ENCODE measurements at regions of chr1 and their contacts with region 1.

Region 1: GRCh38 chr1:100322436-100323211 is 29.7 kb upstream of the CDC14A start:
- DNase-seq: no peak
- ATAC-seq: no peak
- H3K4me3 ChIP-seq: no peak overlapping the region
- H3K4me3 Mint-ChIP-seq: no peak overlapping the region
- H3K27ac ChIP-seq: no peak overlapping the region
- H3K27ac Mint-ChIP-seq: no peak overlapping the region
- H3K4me1 ChIP-seq: no peaks in the 10 kb centered on the region
- H3K4me1 Mint-ChIP-seq: no peaks in the 10 kb centered on the region
- H3K27me3 ChIP-seq: no peaks in the 10 kb centered on the region
- H3K27me3 Mint-ChIP-seq: no peaks in the 10 kb centered on the region

Region 2: GRCh38 chr1:99758073-99758511 is 564.5 kb before region 1 on chr1:
- CTCF ChIA-PET with region 1: no interaction called
- POLR2A ChIA-PET with region 1: no interaction called
- DNase-seq: no peak
- ATAC-seq: no peak
- H3K4me3 ChIP-seq: no peak overlapping the region
- H3K4me3 Mint-ChIP-seq: no peak overlapping the region
- H3K27ac ChIP-seq: no peak overlapping the region
- H3K27ac Mint-ChIP-seq: no peak overlapping the region
- H3K4me1 ChIP-seq: peaks cover 0 to 3% of the 10 kb centered on the region in 2 experiments
- H3K4me1 Mint-ChIP-seq: peaks cover 0 to 8% (median 8%) of the 10 kb centered on the region in 3 donors
- H3K27me3 ChIP-seq: no peaks in the 10 kb centered on the region
- H3K27me3 Mint-ChIP-seq: peaks cover 0 to 1% of the 10 kb centered on the region in 2 donors

Region 3: DNA sequence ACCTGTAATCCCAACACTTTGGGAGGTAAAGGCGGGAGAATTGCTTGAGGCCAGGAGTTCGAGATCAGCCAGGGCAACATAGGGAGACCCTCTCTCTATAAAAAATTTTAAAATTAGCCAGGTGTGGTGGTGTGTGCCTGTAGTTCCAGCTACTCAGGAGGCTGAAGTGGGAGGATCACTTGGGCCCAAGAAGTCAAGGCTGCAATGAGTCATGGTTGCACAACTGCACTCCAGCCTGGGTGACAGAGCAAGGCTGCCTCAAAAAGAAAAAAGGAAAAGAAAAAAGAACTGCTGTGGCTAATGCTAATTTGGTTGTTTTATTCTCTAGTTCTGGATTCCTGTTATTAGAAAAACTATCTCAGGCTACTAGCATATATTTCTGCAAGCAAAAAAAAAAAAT is 102.7 kb before region 1 on chr1:
- CTCF ChIA-PET with region 1: no interaction called
- POLR2A ChIA-PET with region 1: no interaction called
- DNase-seq: no peak
- ATAC-seq: no peak
- H3K4me3 ChIP-seq: no peak overlapping the region
- H3K4me3 Mint-ChIP-seq: no peak overlapping the region
- H3K27ac ChIP-seq: no peak overlapping the region
- H3K27ac Mint-ChIP-seq: no peak overlapping the region
- H3K4me1 ChIP-seq: no peaks in the 10 kb centered on the region
- H3K4me1 Mint-ChIP-seq: peaks cover 9 to 12% (median 11%) of the 10 kb centered on the region in 3 donors
- H3K27me3 ChIP-seq: no peaks in the 10 kb centered on the region
- H3K27me3 Mint-ChIP-seq: no peaks in the 10 kb centered on the region

Region 4: DNA sequence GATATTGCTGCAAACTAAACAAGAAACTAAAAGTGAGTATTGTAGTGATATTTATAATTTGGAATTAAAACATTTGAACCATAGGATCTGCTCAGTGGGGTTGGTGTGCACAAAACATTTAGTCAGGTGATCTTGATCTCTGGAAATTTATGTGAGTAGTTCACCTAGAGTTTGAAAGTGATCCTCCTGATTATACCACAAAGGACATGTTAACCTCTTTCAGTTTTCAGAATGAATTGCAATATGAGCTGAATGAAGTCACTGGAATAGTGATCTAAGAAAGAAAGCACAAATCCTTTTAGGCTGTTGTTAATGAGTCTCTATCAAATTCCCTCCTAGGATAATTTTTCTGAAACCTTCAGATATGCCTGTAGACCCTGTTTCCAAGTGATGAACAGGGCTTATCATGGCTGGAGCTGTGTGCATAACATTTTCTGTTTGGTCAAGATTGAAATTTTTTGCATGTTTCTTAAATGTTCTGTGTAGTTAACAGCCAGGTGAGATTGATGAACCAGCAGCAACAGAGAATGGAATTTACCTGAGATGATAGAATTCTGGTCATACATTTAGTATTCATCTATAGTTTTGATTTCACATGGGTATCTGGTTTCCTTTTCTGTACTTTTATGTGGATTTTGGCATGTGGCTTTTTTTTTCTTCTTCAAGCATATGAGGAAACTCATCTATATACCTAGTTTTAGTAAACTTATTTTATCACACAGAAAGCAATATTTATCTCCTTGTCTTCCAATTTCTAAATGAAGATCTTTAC is 55.2 kb after region 1 on chr1:
- CTCF ChIA-PET with region 1: no interaction called
- POLR2A ChIA-PET with region 1: interaction called in 1 of 2 experiments, 10 read pairs
- DNase-seq: no peak
- ATAC-seq: peak; percentile 20 to 55 (median 40)
- H3K4me3 ChIP-seq: no peak overlapping the region
- H3K4me3 Mint-ChIP-seq: peak overlapping the region; percentile 10 to 44 (median 28)
- H3K27ac ChIP-seq: no peak overlapping the region
- H3K27ac Mint-ChIP-seq: peak overlapping the region; percentile 79 to 83
- H3K4me1 ChIP-seq: peaks cover 22% of the 10 kb centered on the region in 2 experiments
- H3K4me1 Mint-ChIP-seq: peaks cover 77 to 86% (median 83%) of the 10 kb centered on the region in 3 donors
- H3K27me3 ChIP-seq: no peaks in the 10 kb centered on the region
- H3K27me3 Mint-ChIP-seq: no peaks in the 10 kb centered on the region

Region 5: GRCh38 chr1:100404821-100405220 is 82.2 kb after region 1 on chr1:
- CTCF ChIA-PET with region 1: no interaction called
- POLR2A ChIA-PET with region 1: no interaction called
- DNase-seq: no peak
- ATAC-seq: no peak
- H3K4me3 ChIP-seq: no peak overlapping the region
- H3K4me3 Mint-ChIP-seq: peak overlapping the region in 2 of 3 donors; percentile 3 to 57
- H3K27ac ChIP-seq: peak overlapping the region; percentile 32
- H3K27ac Mint-ChIP-seq: peak overlapping the region; percentile 87 to 96
- H3K4me1 ChIP-seq: peaks cover 35 to 38% of the 10 kb centered on the region in 2 experiments
- H3K4me1 Mint-ChIP-seq: peaks cover 85 to 97% (median 86%) of the 10 kb centered on the region in 3 donors
- H3K27me3 ChIP-seq: no peaks in the 10 kb centered on the region
- H3K27me3 Mint-ChIP-seq: no peaks in the 10 kb centered on the region

Measured in T-cell (primary cell).